ENCODE measurements at regions of chr4 and their contacts with region 1.

Region 1: DNA sequence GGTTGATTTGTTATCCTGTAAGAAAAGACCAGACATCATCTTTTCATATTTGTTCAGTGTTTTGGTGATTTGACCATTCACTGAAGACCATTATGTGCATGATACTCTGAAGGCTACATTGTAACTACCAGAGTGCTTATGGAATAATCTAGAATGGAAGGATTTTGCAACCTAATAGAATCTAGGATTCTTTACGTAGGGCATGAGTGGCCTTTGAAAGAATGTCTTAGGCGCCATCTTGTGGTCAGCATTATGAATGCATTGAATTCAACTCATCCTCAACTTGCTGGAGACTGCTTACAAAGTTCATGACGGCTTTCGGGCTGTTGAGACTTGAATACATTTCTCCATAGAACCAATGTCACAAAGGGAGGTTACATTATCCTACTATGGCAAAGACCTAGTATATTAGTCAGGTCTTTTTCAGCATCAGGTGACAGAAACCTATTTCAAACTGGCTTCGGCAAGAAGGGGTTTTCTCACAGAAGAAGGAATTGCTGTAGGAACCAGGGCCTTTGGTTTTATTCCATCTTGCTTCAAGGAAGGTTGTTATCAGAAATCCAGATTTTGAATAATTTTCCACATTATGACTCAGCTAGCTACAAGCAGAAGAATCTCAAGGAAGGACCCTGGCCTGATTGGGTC is 104.1 kb downstream of the GPAT3 start:
- DNase-seq: peak; percentile 65
- H3K4me3 Mint-ChIP-seq: no peak overlapping the region
- H3K27ac Mint-ChIP-seq: no peak overlapping the region
- H3K4me1 Mint-ChIP-seq: no peaks in the 10 kb centered on the region
- H3K27me3 Mint-ChIP-seq: peaks cover 9% of the 10 kb centered on the region

Region 2: DNA sequence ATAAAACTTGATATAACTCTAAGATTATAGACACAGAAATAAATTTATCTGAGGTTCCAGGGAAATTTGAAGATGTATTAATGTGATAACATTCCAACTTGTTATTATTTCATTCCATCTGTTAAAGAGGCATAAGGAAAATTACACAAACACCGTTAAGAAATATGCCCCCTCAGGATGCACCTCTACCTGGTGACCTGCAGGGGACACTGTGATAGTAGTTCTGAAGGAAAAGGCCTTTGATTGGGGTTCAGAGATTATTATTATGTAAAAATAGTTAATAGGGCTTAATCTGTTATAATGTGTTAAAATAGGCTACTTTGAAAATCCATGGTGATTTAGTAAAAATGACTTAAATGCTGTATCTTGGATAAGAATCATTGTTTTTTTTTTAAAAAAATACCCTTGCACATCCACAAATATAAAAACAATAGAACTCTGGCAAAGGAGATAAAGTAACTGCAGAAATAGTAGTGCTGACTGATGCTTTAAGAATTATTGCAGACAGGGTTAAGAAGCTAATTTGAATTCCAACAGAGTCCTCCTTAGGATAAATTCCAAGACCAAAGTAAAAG is 149.0 kb before region 1 on chr4:
- CTCF ChIA-PET with region 1: interaction called, 13 read pairs
- DNase-seq: no peak
- H3K4me3 Mint-ChIP-seq: no peak overlapping the region
- H3K27ac Mint-ChIP-seq: no peak overlapping the region
- H3K4me1 Mint-ChIP-seq: peaks cover 9% of the 10 kb centered on the region
- H3K27me3 Mint-ChIP-seq: peaks cover 9% of the 10 kb centered on the region

Region 3: DNA sequence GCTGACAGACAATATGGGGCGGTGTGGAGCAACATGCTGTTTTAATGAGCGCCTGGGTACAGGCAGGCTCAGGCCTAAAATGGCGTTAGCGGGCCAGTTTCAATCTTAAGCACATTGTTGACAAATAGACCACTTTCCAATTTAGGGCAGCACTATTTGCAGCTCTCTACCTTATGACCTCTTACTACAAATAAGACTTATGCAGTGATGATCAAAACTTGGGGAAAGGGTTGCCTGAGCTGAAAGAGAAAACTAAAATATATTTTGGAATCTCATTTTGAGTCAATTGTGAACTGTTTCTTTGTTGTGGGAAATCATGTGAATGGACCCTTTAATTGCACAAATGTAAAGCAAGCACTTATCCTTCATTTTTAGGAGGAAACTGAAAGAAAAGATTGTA is 129.5 kb before region 1 on chr4:
- CTCF ChIA-PET with region 1: interaction called, 40 read pairs
- DNase-seq: no peak
- H3K4me3 Mint-ChIP-seq: no peak overlapping the region
- H3K27ac Mint-ChIP-seq: no peak overlapping the region
- H3K4me1 Mint-ChIP-seq: no peaks in the 10 kb centered on the region
- H3K27me3 Mint-ChIP-seq: peaks cover 6% of the 10 kb centered on the region

Region 4: GRCh38 chr4:84001866-84002569 is 362.0 kb after region 1 on chr4:
- CTCF ChIA-PET with region 1: no interaction called
- DNase-seq: no peak
- H3K4me3 Mint-ChIP-seq: no peak overlapping the region
- H3K27ac Mint-ChIP-seq: no peak overlapping the region
- H3K4me1 Mint-ChIP-seq: no peaks in the 10 kb centered on the region
- H3K27me3 Mint-ChIP-seq: no peaks in the 10 kb centered on the region

Region 5: GRCh38 chr4:84451546-84451945 is 811.6 kb after region 1 on chr4:
- CTCF ChIA-PET with region 1: interaction called, 10 read pairs
- DNase-seq: no peak
- H3K4me3 Mint-ChIP-seq: no peak overlapping the region
- H3K27ac Mint-ChIP-seq: no peak overlapping the region
- H3K4me1 Mint-ChIP-seq: no peaks in the 10 kb centered on the region
- H3K27me3 Mint-ChIP-seq: no peaks in the 10 kb centered on the region

Measured in activated naive CD4-positive, alpha-beta T cell treated with anti-CD3 and anti-CD28 coated beads, Interleukin-2, amount 10 ng/mL, durations not matched to agents 7 days and 5 days (primary cell).